Panc1 (cell line): ENCODE measurements at regions of chr1 and their contacts with region 1.

Region 1: DNA sequence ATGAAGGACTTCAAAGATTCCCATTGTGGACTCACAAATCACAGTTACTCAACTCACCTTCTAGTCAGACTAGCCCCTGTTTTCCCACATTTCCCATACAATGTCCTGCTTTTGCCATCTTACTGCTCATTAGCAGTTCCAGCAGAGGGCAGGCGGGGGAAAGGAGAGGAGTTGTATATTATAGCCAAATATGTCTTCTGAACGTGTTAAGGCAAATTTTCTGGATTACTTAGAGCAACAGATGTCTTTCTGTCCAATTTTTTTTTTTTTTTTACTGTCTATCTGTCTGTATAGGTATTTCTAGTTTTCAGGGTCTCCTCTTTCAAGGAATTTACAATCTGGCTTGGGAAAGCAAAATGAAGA is 29.9 kb upstream of the DDAH1 start:
- DNase-seq: no peak
- ATAC-seq: peak; percentile 80
- H3K4me3 ChIP-seq: no peak overlapping the region
- H3K27ac ChIP-seq: peak overlapping the region; percentile 85
- H3K4me1 ChIP-seq: peaks cover 45% of the 10 kb centered on the region
- H3K27me3 ChIP-seq: no peaks in the 10 kb centered on the region
- CTCF ChIP-seq: peak; percentile 93

Region 2: DNA sequence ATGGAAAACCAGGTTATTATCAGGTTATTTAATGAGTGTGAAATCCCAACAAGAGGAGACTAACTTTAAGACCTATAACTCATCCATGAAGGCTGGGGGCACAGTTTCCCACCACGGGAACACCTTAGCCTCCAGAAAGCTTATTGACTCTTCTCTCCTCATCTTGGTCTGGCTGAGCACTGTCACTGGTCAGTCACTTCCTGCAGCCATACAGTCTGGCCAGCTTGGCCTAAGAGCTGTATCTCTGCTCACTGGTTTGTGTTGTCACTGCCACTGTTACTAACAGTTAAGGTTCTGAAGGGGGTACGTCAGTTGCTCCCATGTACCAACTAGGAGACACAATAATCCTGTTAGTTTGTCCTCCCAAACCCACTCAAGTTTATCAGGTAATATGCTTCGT is 13.2 kb before region 1 on chr1:
- CTCF ChIA-PET with region 1: no interaction called
- POLR2A ChIA-PET with region 1: no interaction called
- in situ Hi-C with region 1: no loop called
- intact Hi-C with region 1: loop called (anchors 1 kb)
- DNase-seq: no peak
- ATAC-seq: 0 out of 2 replicates have a peak, but pooled peaks have one; percentile 50
- H3K4me3 ChIP-seq: no peak overlapping the region
- H3K27ac ChIP-seq: no peak overlapping the region
- H3K4me1 ChIP-seq: no peaks in the 10 kb centered on the region
- H3K27me3 ChIP-seq: no peaks in the 10 kb centered on the region
- CTCF ChIP-seq: no peak